K562 (cell line): ENCODE measurements at regions of chr22 and their contacts with region 1.

Region 1: GRCh38 chr22:22959147-22959827 is 71.7 kb downstream of the IGLL5 start:
- DNase-seq: peak; percentile 98 to 99 (median 99)
- ATAC-seq: peak; percentile 85
- H3K4me3 ChIP-seq: no peak overlapping the region
- H3K27ac ChIP-seq: no peak overlapping the region
- H3K4me1 ChIP-seq: no peaks in the 10 kb centered on the region
- H3K27me3 ChIP-seq: peaks cover 3 to 6% of the 10 kb centered on the region in 2 experiments; a peak in 3 of 5 replicates
- CTCF ChIP-seq: no peak
- EP300 ChIP-seq: no peak
- POLR2A ChIP-seq: no peak
- RAD21 ChIP-seq: no peak

Region 2: DNA sequence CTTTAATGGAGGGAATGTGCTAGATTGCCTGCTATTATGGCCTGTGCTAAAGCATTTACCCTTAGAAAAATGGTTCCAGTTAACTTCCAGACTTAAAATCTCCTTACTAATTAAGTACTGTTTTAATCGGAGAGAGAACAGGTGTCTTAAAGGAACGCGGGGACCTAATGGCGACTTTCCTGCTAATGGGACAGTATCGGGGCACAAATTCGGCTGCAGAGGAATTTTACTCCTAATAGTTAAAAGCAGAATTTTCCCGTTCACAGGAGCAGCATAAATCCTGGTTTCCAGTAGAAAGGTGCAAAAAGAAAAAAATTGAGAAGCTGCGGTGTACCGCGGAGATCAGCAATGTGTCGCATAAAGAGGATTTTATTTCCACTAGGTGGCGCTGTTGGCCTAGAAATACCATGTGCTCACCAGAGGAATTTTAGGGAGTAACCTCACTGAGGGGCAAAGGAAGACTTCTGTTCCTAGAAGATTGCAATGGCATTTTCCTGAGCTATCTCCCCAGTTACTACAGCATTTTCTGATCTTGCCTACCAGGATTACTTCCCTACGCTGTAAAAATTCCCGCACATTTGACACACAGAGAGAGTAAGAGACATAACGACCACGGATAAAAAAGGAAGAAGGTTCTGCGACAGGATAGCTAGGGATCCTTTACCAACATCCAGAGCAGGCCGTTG is 495.3 kb before region 1 on chr22:
- CTCF ChIA-PET with region 1: interaction called, 35 read pairs
- POLR2A ChIA-PET with region 1: no interaction called
- in situ Hi-C with region 1: loop called (anchors 5 kb)
- intact Hi-C with region 1: loop called (anchors 1 kb)
- DNase-seq: peak; percentile 97 to 99 (median 99)
- ATAC-seq: peak; percentile 97
- H3K4me3 ChIP-seq: no peak overlapping the region
- H3K27ac ChIP-seq: no peak overlapping the region
- H3K4me1 ChIP-seq: peaks cover 0 to 2% of the 10 kb centered on the region in 2 experiments; a peak in 1 of 5 replicates
- H3K27me3 ChIP-seq: peaks cover 13 to 18% of the 10 kb centered on the region in 2 experiments; a peak in 4 of 5 replicates
- CTCF ChIP-seq: peak in 2 of 3 experiments; percentile 100; a peak in 4 of 6 replicates
- EP300 ChIP-seq: no peak; the same call in 1 of the 2 replicates
- POLR2A ChIP-seq: no peak
- RAD21 ChIP-seq: peak in 1 of 2 experiments; percentile 100; a peak in 2 of 4 replicates

Region 3: GRCh38 chr22:22770280-22770871 is 188.9 kb before region 1 on chr22:
- CTCF ChIA-PET with region 1: interaction called, 7 read pairs
- POLR2A ChIA-PET with region 1: interaction called, 6 read pairs
- in situ Hi-C with region 1: no loop called
- intact Hi-C with region 1: loop called (anchors 1 kb)
- DNase-seq: peak; percentile 96 to 100 (median 98)
- ATAC-seq: peak; percentile 94
- H3K4me3 ChIP-seq: no peak overlapping the region
- H3K27ac ChIP-seq: no peak overlapping the region
- H3K4me1 ChIP-seq: no peaks in the 10 kb centered on the region
- H3K27me3 ChIP-seq: peaks cover 0 to 32% of the 10 kb centered on the region in 2 experiments; a peak in 2 of 5 replicates
- CTCF ChIP-seq: peak in 1 of 3 experiments; percentile 100; a peak in 2 of 6 replicates
- EP300 ChIP-seq: peak; percentile 71
- POLR2A ChIP-seq: no peak
- RAD21 ChIP-seq: no peak

Region 4: DNA sequence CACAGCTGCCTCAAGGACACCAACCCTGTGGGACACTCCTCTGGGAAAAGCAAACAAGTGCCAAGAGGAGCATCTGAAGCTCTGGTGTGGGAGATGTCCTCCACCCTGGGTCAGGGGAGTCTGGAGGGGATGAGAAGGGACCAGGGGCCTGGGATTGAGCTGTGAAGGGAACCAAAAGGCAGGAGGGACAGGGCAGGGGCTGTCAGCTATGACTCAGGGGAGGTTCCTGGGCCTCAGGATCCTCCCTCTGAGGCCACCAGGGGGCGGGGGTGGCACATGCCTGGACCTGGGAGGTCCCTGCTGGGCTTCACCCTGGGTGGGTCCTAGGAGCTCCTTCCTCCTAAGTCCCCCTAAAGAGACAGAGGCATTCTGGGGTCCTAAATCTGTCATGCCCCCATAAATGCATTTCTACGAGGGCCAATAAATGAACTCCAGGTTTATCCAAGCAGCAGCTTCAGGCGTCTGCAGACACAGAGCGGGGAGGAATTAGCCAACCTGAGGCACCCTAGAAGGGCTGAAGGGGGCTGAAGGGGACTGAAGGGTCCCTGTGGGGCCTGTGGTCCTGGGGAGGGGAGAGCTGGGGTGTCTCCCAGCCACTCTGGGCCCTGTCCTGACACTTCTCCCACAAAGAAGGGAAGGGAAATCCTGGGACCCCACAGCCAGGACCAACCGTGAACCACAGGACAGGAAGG is 103.5 kb before region 1 on chr22:
- CTCF ChIA-PET with region 1: interaction called, 83 read pairs
- POLR2A ChIA-PET with region 1: interaction called, 7 read pairs
- in situ Hi-C with region 1: no loop called
- intact Hi-C with region 1: loop called (anchors 1 kb)
- DNase-seq: peak; percentile 93 to 100 (median 98)
- ATAC-seq: peak; percentile 98
- H3K4me3 ChIP-seq: no peak overlapping the region
- H3K27ac ChIP-seq: no peak overlapping the region
- H3K4me1 ChIP-seq: no peaks in the 10 kb centered on the region
- H3K27me3 ChIP-seq: peaks cover 22 to 38% of the 10 kb centered on the region in 2 experiments
- CTCF ChIP-seq: no peak
- EP300 ChIP-seq: no peak
- POLR2A ChIP-seq: no peak
- RAD21 ChIP-seq: no peak

Region 5: GRCh38 chr22:23119494-23120414 is 160.5 kb after region 1 on chr22:
- CTCF ChIA-PET with region 1: interaction called, 549 read pairs
- POLR2A ChIA-PET with region 1: interaction called, 13 read pairs
- in situ Hi-C with region 1: no loop called
- intact Hi-C with region 1: no loop called
- DNase-seq: peak in 2 of 4 experiments; percentile 66 to 80
- ATAC-seq: peak; percentile 65
- H3K4me3 ChIP-seq: no peak overlapping the region
- H3K27ac ChIP-seq: no peak overlapping the region
- H3K4me1 ChIP-seq: peaks cover 9 to 29% of the 10 kb centered on the region in 2 experiments; a peak in 4 of 5 replicates
- H3K27me3 ChIP-seq: peaks cover 50 to 95% of the 10 kb centered on the region in 2 experiments
- CTCF ChIP-seq: peak in 2 of 3 experiments; percentile 32 to 46; a peak in 3 of 6 replicates
- EP300 ChIP-seq: no peak
- POLR2A ChIP-seq: no peak
- RAD21 ChIP-seq: peak in 1 of 2 experiments; percentile 27; a peak in 2 of 4 replicates

Region 6: GRCh38 chr22:23289851-23290724 is 330.8 kb after region 1 on chr22:
- CTCF ChIA-PET with region 1: interaction called, 265 read pairs
- POLR2A ChIA-PET with region 1: interaction called, 3 read pairs
- in situ Hi-C with region 1: no loop called
- intact Hi-C with region 1: no loop called
- DNase-seq: peak; percentile 81 to 92 (median 88)
- ATAC-seq: peak; percentile 88
- H3K4me3 ChIP-seq: no peak overlapping the region
- H3K27ac ChIP-seq: no peak overlapping the region
- H3K4me1 ChIP-seq: peaks cover 0 to 15% of the 10 kb centered on the region in 2 experiments; a peak in 1 of 5 replicates
- H3K27me3 ChIP-seq: no peaks in the 10 kb centered on the region
- CTCF ChIP-seq: peak in 2 of 3 experiments; percentile 82 to 89; a peak in 4 of 6 replicates
- EP300 ChIP-seq: no peak
- POLR2A ChIP-seq: no peak
- RAD21 ChIP-seq: peak in 1 of 2 experiments; percentile 81; a peak in 2 of 4 replicates